ENCODE measurements at regions of chr21 and their contacts with region 1.

Region 1: DNA sequence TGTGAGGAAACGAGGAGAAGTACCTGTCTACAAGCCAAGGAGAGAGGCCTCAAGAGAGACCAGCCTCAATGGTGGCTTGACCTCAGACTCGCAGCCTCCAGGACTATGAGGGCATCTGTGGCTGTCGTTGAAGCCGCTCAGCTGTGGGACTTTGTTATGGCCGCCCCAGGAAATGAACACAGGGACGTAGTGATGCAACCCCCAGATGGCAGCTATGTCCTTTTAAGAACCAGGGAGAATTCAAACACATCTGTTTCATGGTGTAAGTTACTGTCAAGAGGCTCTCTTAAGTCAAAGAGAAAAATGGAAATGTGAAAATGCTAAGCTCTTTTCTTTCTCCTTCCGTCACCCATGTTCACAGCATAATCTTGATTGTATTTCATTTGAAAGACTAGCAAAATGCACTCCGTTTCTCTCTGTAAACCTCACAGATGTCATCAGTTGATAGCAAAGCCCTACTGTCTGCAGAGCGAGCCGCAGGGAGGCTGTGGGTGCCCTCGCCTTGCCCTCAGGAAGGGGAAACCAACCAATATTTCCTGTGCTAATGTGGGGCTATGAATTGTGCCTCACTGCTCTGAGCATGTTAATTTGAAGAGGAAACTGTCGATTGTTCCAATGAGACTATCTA is 21.3 kb downstream of the UBASH3A start:
- DNase-seq: peak; percentile 44 to 90 (median 84)
- ATAC-seq: peak; percentile 94
- H3K4me3 ChIP-seq: peak overlapping the region; percentile 22
- H3K4me3 Mint-ChIP-seq: peak overlapping the region; percentile 54 to 86 (median 80)
- H3K27ac ChIP-seq: peak overlapping the region; percentile 85
- H3K27ac Mint-ChIP-seq: peak overlapping the region; percentile 83 to 94 (median 89)
- H3K4me1 ChIP-seq: peaks cover 68 to 71% of the 10 kb centered on the region in 2 donors
- H3K4me1 Mint-ChIP-seq: peaks cover 59 to 88% (median 81%) of the 10 kb centered on the region in 7 donors
- H3K27me3 ChIP-seq: no peaks in the 10 kb centered on the region
- H3K27me3 Mint-ChIP-seq: peaks cover 0 to 6% (median 0%) of the 10 kb centered on the region in 5 donors

Region 2: DNA sequence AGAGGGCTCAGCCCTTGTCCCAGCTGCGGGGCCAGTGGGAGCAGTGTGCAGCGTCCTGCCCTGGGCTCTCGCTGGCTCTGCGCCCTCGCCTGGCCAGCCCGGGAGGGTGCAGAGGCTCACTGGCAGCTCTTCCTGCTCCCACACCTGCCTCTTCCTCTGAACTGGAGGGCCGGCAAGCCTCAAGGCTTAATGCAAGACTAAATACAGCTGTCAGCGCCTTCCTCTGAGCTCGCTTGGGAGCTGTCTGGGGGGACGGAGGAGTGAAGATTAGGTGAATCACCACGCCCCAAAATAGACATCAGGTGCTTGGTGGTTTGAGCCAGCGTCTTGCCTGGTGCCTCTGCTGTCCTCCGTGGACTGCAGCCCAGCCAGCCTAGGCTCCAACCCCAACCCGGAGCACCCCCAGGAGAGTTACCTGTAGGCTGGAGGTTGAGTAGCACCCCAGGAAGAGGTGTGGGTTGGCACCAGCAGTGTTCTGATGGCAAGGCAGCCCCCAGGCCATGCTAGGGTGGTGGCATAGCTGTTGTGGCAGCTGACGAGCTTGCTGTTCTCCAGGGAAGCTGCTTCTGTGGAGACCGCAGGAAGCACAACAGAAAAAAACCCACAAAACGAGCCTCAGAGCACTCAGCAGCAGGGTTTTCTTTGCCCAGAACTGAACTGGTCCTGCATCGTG is 317.0 kb before region 1 on chr21:
- CTCF ChIA-PET with region 1: no interaction called
- POLR2A ChIA-PET with region 1: no interaction called
- intact Hi-C with region 1: no loop called
- DNase-seq: peak; percentile 46 to 82 (median 69)
- ATAC-seq: peak; percentile 97
- H3K4me3 ChIP-seq: peak overlapping the region; percentile 11
- H3K4me3 Mint-ChIP-seq: peak overlapping the region; percentile 34 to 84 (median 76)
- H3K27ac ChIP-seq: peak overlapping the region; percentile 38
- H3K27ac Mint-ChIP-seq: peak overlapping the region in 8 of 9 donors; percentile 11 to 82 (median 73)
- H3K4me1 ChIP-seq: peaks cover 0 to 15% of the 10 kb centered on the region in 2 donors
- H3K4me1 Mint-ChIP-seq: peaks cover 0 to 28% (median 10%) of the 10 kb centered on the region in 7 donors
- H3K27me3 ChIP-seq: no peaks in the 10 kb centered on the region
- H3K27me3 Mint-ChIP-seq: peaks cover 0 to 4% (median 0%) of the 10 kb centered on the region in 5 donors

Region 3: GRCh38 chr21:42392721-42393442 is 32.1 kb before region 1 on chr21:
- CTCF ChIA-PET with region 1: interaction called, 3 read pairs
- POLR2A ChIA-PET with region 1: interaction called, 181 read pairs
- intact Hi-C with region 1: loop called (anchors 1 to 5 kb)
- DNase-seq: peak in 7 of 9 donors; percentile 29 to 64 (median 54)
- ATAC-seq: peak; percentile 82
- H3K4me3 ChIP-seq: peak overlapping the region; percentile 5
- H3K4me3 Mint-ChIP-seq: peak overlapping the region; percentile 22 to 75 (median 64)
- H3K27ac ChIP-seq: peak overlapping the region; percentile 46
- H3K27ac Mint-ChIP-seq: peak overlapping the region; percentile 5 to 91 (median 83)
- H3K4me1 ChIP-seq: peaks cover 13 to 34% of the 10 kb centered on the region in 2 donors
- H3K4me1 Mint-ChIP-seq: peaks cover 23 to 84% (median 63%) of the 10 kb centered on the region in 7 donors
- H3K27me3 ChIP-seq: no peaks in the 10 kb centered on the region
- H3K27me3 Mint-ChIP-seq: peaks cover 0 to 4% (median 0%) of the 10 kb centered on the region in 5 donors

Region 4: GRCh38 chr21:42406201-42406621 is 18.8 kb before region 1 on chr21:
- CTCF ChIA-PET with region 1: interaction called, 32 read pairs
- POLR2A ChIA-PET with region 1: interaction called, 181 read pairs
- intact Hi-C with region 1: loop called (anchors 1 kb)
- DNase-seq: peak in 8 of 9 donors; percentile 42 to 71 (median 58)
- ATAC-seq: peak; percentile 67
- H3K4me3 ChIP-seq: peak overlapping the region; percentile 66
- H3K4me3 Mint-ChIP-seq: peak overlapping the region; percentile 82 to 99 (median 94)
- H3K27ac ChIP-seq: peak overlapping the region; percentile 89
- H3K27ac Mint-ChIP-seq: peak overlapping the region in 8 of 9 donors; percentile 88 to 99 (median 90)
- H3K4me1 ChIP-seq: peaks cover 56 to 62% of the 10 kb centered on the region in 2 donors
- H3K4me1 Mint-ChIP-seq: peaks cover 42 to 64% (median 60%) of the 10 kb centered on the region in 7 donors
- H3K27me3 ChIP-seq: no peaks in the 10 kb centered on the region
- H3K27me3 Mint-ChIP-seq: no peaks in the 10 kb centered on the region

Region 5: GRCh38 chr21:42437786-42438645 is 13.0 kb after region 1 on chr21:
- CTCF ChIA-PET with region 1: interaction called, 3 read pairs
- POLR2A ChIA-PET with region 1: interaction called, 4 read pairs
- intact Hi-C with region 1: loop called in 1 of 2 experiments (anchors 1 kb)
- DNase-seq: no peak
- ATAC-seq: no peak
- H3K4me3 ChIP-seq: no peak overlapping the region
- H3K4me3 Mint-ChIP-seq: no peak overlapping the region
- H3K27ac ChIP-seq: no peak overlapping the region
- H3K27ac Mint-ChIP-seq: peak overlapping the region in 6 of 9 donors; percentile 14 to 82 (median 66)
- H3K4me1 ChIP-seq: peaks cover 10 to 21% of the 10 kb centered on the region in 2 donors
- H3K4me1 Mint-ChIP-seq: peaks cover 35 to 72% (median 56%) of the 10 kb centered on the region in 7 donors
- H3K27me3 ChIP-seq: no peaks in the 10 kb centered on the region
- H3K27me3 Mint-ChIP-seq: no peaks in the 10 kb centered on the region

Region 6: GRCh38 chr21:42454786-42455580 is 30.0 kb after region 1 on chr21:
- CTCF ChIA-PET with region 1: no interaction called
- POLR2A ChIA-PET with region 1: interaction called, 3 read pairs
- intact Hi-C with region 1: loop called in 1 of 2 experiments (anchors 1 kb)
- DNase-seq: no peak
- ATAC-seq: no peak
- H3K4me3 ChIP-seq: no peak overlapping the region
- H3K4me3 Mint-ChIP-seq: peak overlapping the region in 1 of 10 donors; percentile 17
- H3K27ac ChIP-seq: no peak overlapping the region
- H3K27ac Mint-ChIP-seq: peak overlapping the region in 2 of 9 donors; percentile 32 to 45
- H3K4me1 ChIP-seq: peaks cover 0 to 17% of the 10 kb centered on the region in 2 donors
- H3K4me1 Mint-ChIP-seq: peaks cover 19 to 61% (median 48%) of the 10 kb centered on the region in 7 donors
- H3K27me3 ChIP-seq: no peaks in the 10 kb centered on the region
- H3K27me3 Mint-ChIP-seq: no peaks in the 10 kb centered on the region

Region 7: GRCh38 chr21:42460391-42461204 is 35.6 kb after region 1 on chr21:
- CTCF ChIA-PET with region 1: no interaction called
- POLR2A ChIA-PET with region 1: no interaction called
- intact Hi-C with region 1: loop called in 1 of 2 experiments (anchors 2 kb)
- DNase-seq: peak in 8 of 9 donors; percentile 31 to 84 (median 80)
- ATAC-seq: peak; percentile 81
- H3K4me3 ChIP-seq: peak overlapping the region; percentile 30
- H3K4me3 Mint-ChIP-seq: peak overlapping the region in 9 of 10 donors; percentile 58 to 85 (median 78)
- H3K27ac ChIP-seq: peak overlapping the region; percentile 73
- H3K27ac Mint-ChIP-seq: peak overlapping the region; percentile 59 to 99 (median 96)
- H3K4me1 ChIP-seq: peaks cover 18 to 61% of the 10 kb centered on the region in 2 donors
- H3K4me1 Mint-ChIP-seq: peaks cover 54 to 81% (median 79%) of the 10 kb centered on the region in 7 donors
- H3K27me3 ChIP-seq: no peaks in the 10 kb centered on the region
- H3K27me3 Mint-ChIP-seq: no peaks in the 10 kb centered on the region

Measured in naive thymus-derived CD4-positive, alpha-beta T cell (primary cell).